Left ventricle myocardium inferior (tissue), 1 donor: ENCODE measurements at regions of chr10 and their contacts with region 1.

Region 1: DNA sequence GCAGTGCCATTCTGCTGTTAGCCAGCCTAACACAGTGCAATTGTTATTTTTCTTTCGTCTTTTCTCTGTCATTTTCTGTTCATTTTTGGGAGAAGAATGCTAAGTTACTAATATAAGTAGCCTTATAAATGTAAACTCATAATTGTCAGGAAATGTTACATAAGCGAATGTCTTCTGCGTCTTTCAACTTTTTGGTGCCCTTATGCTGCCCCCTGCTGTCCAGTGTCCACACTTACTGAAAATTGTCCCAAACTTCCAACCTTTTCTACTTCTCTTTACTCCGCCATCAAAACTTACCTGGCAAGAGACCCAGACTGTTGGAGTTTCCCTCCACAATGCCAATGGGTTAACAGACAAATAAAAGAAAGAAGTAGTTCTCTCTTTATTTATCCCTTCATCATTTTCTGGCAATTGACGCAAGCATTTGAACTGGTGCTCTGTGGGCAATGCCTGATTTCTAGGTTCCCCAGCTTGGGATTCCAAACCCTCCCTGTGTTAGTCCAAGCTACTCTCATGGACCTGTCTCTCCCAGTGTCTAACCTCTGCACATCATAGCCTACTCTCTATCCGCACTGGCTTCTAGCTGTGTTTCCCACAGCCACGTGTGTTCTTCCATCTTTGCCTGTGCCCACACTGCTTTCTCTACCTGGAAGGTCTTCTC is 21.0 kb upstream of the EPC1 start:
- DNase-seq: peak; percentile 62
- H3K4me3 ChIP-seq: peak overlapping the region; percentile 43
- H3K27ac ChIP-seq: peak overlapping the region; percentile 57
- H3K4me1 ChIP-seq: peaks cover 71% of the 10 kb centered on the region
- H3K27me3 ChIP-seq: no peaks in the 10 kb centered on the region
- CTCF ChIP-seq: peak; percentile 83

Region 2: DNA sequence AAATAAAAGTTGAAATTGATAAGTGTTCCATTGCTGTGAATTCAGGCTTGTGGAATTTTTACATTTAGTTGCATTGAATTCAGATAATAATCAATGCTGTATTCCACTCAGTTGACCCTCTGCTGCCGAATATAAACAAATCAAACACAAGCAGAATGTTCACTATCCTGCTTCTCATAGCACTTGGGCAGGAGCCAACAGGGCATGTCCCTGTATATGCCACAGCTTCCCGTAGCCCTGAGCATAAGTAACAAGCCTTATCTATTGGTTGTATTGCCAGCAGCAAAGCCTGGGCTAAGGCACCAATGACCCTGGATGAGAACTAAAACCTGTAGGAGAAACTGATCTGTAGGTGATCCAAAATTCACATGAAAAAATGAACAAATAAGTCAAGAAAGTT is 585.2 kb before region 1 on chr10:
- intact Hi-C with region 1: no loop called
- DNase-seq: no peak
- H3K4me3 ChIP-seq: no peak overlapping the region
- H3K27ac ChIP-seq: no peak overlapping the region
- H3K4me1 ChIP-seq: no peaks in the 10 kb centered on the region
- H3K27me3 ChIP-seq: no peaks in the 10 kb centered on the region
- CTCF ChIP-seq: no peak

Region 3: DNA sequence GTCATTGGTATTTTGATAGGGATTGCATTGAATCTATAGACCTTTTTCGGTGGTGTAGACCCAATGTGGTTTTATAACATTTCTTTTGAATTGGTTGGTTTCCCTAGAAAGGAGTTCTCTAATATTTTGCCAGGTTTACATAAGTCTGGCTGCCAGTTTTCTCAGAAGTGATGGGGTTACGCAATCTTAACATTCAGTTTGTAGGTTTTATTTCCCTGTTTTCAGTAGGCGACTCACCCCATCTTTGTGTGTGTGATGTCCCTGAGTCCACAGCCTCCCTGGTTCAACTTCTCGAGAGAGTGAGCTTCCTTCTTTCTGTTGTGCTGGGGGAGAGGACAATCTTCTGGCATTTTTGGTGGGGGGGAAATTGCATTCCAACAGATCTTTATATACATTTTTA is 302.1 kb before region 1 on chr10:
- intact Hi-C with region 1: loop called (anchors 10 kb)
- DNase-seq: no peak
- H3K4me3 ChIP-seq: no peak overlapping the region
- H3K27ac ChIP-seq: no peak overlapping the region
- H3K4me1 ChIP-seq: peaks cover 6% of the 10 kb centered on the region
- H3K27me3 ChIP-seq: no peaks in the 10 kb centered on the region
- CTCF ChIP-seq: no peak

Region 4: GRCh38 chr10:32256613-32257437 is 111.1 kb before region 1 on chr10:
- intact Hi-C with region 1: loop called (anchors 5 kb)
- DNase-seq: peak; percentile 64
- H3K4me3 ChIP-seq: no peak overlapping the region
- H3K27ac ChIP-seq: no peak overlapping the region
- H3K4me1 ChIP-seq: no peaks in the 10 kb centered on the region
- H3K27me3 ChIP-seq: no peaks in the 10 kb centered on the region
- CTCF ChIP-seq: peak; percentile 92